ENCODE measurements at regions of chr6 and their contacts with region 1.

Region 1: GRCh38 chr6:34284563-34285447 is 36.0 kb upstream of the SMIM29 start:
- DNase-seq: no peak
- H3K4me3 ChIP-seq: no peak overlapping the region
- H3K27ac ChIP-seq: no peak overlapping the region
- H3K4me1 ChIP-seq: no peaks in the 10 kb centered on the region
- H3K27me3 ChIP-seq: no peaks in the 10 kb centered on the region
- CTCF ChIP-seq: no peak

Region 2: GRCh38 chr6:34207695-34208443 is 76.9 kb before region 1 on chr6:
- CTCF ChIA-PET with region 1: no interaction called
- dilution Hi-C with region 1: no loop called
- in situ Hi-C with region 1: no loop called
- intact Hi-C with region 1: no loop called
- DNase-seq: no peak
- H3K4me3 ChIP-seq: no peak overlapping the region
- H3K27ac ChIP-seq: no peak overlapping the region
- H3K4me1 ChIP-seq: peaks cover 4% of the 10 kb centered on the region
- H3K27me3 ChIP-seq: no peaks in the 10 kb centered on the region
- CTCF ChIP-seq: no peak

Region 3: GRCh38 chr6:34273242-34273805 is 11.5 kb before region 1 on chr6:
- CTCF ChIA-PET with region 1: interaction called, 18 read pairs
- dilution Hi-C with region 1: no loop called
- in situ Hi-C with region 1: no loop called
- intact Hi-C with region 1: no loop called
- DNase-seq: no peak
- H3K4me3 ChIP-seq: no peak overlapping the region
- H3K27ac ChIP-seq: no peak overlapping the region
- H3K4me1 ChIP-seq: no peaks in the 10 kb centered on the region
- H3K27me3 ChIP-seq: no peaks in the 10 kb centered on the region
- CTCF ChIP-seq: no peak